Activated CD4-positive, alpha-beta T cell treated with anti-CD3 and anti-CD28 coated beads, Interleukin-2, amount 10 ng/mL, durations not matched to agents 7 days and 5 days (primary cell): ENCODE measurements at regions of chr3 and their contacts with region 1.

Region 1: DNA sequence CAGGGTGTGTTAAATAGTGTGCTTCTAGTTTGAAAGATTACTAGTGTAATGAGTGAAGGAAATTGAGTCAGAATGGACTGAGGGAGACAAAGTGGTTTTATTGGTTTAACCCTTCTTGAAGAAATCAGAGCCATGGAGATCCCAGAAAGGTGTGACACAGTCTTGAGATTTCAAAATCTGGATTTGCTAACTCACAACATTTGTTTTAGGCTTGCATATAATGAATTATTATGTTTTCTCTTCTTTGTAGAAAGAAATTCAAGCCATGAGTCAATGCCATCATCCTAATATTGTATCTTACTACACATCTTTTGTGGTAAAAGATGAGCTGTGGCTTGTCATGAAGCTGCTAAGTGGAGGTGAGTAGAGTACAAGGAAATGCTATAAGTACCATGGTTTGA is 25.1 kb downstream of the OXSR1 start:
- DNase-seq: no peak
- H3K4me3 Mint-ChIP-seq: no peak overlapping the region
- H3K27ac Mint-ChIP-seq: no peak overlapping the region
- H3K4me1 Mint-ChIP-seq: peaks cover 5% of the 10 kb centered on the region
- H3K27me3 Mint-ChIP-seq: no peaks in the 10 kb centered on the region

Region 2: DNA sequence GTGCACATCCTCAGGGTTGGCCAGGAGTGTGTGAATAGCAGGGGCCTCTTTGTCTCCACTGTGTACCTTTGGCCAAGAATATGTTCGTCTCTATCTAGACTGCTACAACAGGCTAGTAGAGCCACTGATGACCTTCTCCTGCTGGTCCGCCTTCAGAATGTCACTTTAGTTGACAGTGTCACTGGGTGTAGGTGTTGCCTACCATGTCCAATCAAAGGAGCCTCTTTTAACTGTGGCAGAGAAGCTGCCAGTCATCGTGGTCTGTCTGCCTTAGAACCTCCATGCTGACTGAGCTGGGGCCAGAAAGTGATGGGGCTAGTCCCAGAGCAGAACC is 15.0 kb after region 1 on chr3:
- CTCF ChIA-PET with region 1: interaction called, 17 read pairs
- POLR2A ChIA-PET with region 1: no interaction called
- DNase-seq: no peak
- H3K4me3 Mint-ChIP-seq: no peak overlapping the region
- H3K27ac Mint-ChIP-seq: peak overlapping the region; percentile 84
- H3K4me1 Mint-ChIP-seq: peaks cover 63% of the 10 kb centered on the region
- H3K27me3 Mint-ChIP-seq: no peaks in the 10 kb centered on the region